ENCODE measurements at regions of chr2 and their contacts with region 1.

Region 1: DNA sequence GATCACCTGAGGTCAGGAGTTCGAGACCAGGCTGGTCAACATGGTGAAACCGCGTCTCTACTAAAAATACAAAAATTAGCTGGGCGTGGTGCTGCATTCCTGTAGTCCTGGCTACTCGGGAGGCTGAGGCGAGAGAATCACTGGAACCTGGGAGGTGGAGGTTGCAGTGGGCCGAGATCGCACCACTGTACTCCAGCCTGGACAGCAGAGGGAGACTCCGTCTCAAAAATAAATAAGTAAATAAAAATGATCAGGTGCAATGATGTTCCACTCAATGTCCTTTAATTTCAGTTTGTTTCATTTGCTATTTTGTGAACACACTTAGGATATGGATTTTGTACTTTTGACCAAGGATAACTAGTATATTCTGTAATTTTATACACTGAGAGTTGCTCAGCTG is 9.3 kb downstream of the HADHA start:
- DNase-seq: no peak
- H3K4me3 ChIP-seq: no peak overlapping the region
- H3K27ac ChIP-seq: no peak overlapping the region
- H3K4me1 ChIP-seq: no peaks in the 10 kb centered on the region
- H3K27me3 ChIP-seq: no peaks in the 10 kb centered on the region
- CTCF ChIP-seq: peak in 1 of 2 donors; percentile 32

Region 2: GRCh38 chr2:26330113-26330549 is 95.0 kb after region 1 on chr2:
- CTCF ChIA-PET with region 1: no interaction called
- dilution Hi-C with region 1: no loop called
- in situ Hi-C with region 1: loop called in 1 of 2 experiments (anchors 10 kb)
- intact Hi-C with region 1: loop called (anchors 2 kb)
- DNase-seq: peak; percentile 76
- H3K4me3 ChIP-seq: no peak overlapping the region
- H3K27ac ChIP-seq: no peak overlapping the region
- H3K4me1 ChIP-seq: peaks cover 10% of the 10 kb centered on the region
- H3K27me3 ChIP-seq: no peaks in the 10 kb centered on the region
- CTCF ChIP-seq: peak; percentile 94 to 95

Region 3: GRCh38 chr2:26462511-26463243 is 227.6 kb after region 1 on chr2:
- CTCF ChIA-PET with region 1: no interaction called
- dilution Hi-C with region 1: no loop called
- in situ Hi-C with region 1: loop called in 1 of 2 experiments (anchors 25 kb)
- intact Hi-C with region 1: loop called (anchors 2 kb)
- DNase-seq: peak; percentile 50
- H3K4me3 ChIP-seq: no peak overlapping the region
- H3K27ac ChIP-seq: no peak overlapping the region
- H3K4me1 ChIP-seq: no peaks in the 10 kb centered on the region
- H3K27me3 ChIP-seq: no peaks in the 10 kb centered on the region
- CTCF ChIP-seq: peak; percentile 71 to 93